B cell (primary cell): ENCODE measurements at regions of chr3 and their contacts with region 1.

Region 1: DNA sequence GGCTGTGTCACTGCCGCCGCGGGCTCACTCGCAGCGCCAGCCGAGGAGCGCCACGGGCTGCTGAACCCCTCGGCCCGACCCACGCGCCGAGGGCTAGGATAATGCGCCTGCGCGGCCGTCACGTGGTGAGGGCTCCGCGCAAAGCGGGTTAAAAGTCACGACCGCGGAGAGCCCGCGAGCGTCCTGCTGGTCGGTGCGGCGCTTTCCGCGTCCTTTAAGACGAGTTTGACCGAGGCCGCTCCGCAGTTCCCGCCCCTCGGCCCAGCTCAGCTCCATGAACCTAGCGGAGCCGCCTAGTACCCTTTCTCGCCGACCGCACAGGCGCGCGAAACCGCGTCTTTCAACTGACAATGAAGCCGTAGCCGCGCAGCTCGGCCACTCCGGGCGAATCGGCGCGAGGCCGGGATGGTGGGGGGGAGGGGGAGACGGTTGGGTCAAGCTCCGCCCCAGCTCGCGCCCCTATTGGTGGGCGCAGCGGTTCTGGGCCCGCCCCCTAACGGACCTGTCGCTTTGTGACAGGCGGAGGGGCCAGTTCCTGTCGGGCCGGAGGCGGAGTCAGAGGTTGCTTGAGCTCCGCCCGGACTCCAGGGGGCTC is 636 bp upstream of the STT3B start:
- DNase-seq: peak; percentile 99
- ATAC-seq: peak; percentile 84
- H3K4me3 ChIP-seq: peak overlapping the region; percentile 36 to 86 (median 82)
- H3K4me3 Mint-ChIP-seq: peak overlapping the region; percentile 98
- H3K27ac ChIP-seq: peak overlapping the region; percentile 94 to 98
- H3K27ac Mint-ChIP-seq: peak overlapping the region; percentile 99
- H3K4me1 ChIP-seq: peaks cover 36 to 37% of the 10 kb centered on the region in 2 donors
- H3K4me1 Mint-ChIP-seq: peaks cover 31% of the 10 kb centered on the region
- H3K27me3 ChIP-seq: no peaks in the 10 kb centered on the region
- H3K27me3 Mint-ChIP-seq: peaks cover 3% of the 10 kb centered on the region
- CTCF ChIP-seq: no peak

Region 2: GRCh38 chr3:30658328-30659052 is 873.6 kb before region 1 on chr3:
- CTCF ChIA-PET with region 1: no interaction called
- POLR2A ChIA-PET with region 1: no interaction called
- intact Hi-C with region 1: loop called (anchors 10 kb)
- DNase-seq: peak; percentile 74
- ATAC-seq: peak; percentile 83
- H3K4me3 ChIP-seq: peak overlapping the region in 2 of 5 experiments; percentile 2 to 23
- H3K4me3 Mint-ChIP-seq: peak overlapping the region; percentile 69
- H3K27ac ChIP-seq: peak overlapping the region; percentile 56 to 82
- H3K27ac Mint-ChIP-seq: peak overlapping the region; percentile 87
- H3K4me1 ChIP-seq: peaks cover 85 to 97% of the 10 kb centered on the region in 2 donors
- H3K4me1 Mint-ChIP-seq: peaks cover 93% of the 10 kb centered on the region
- H3K27me3 ChIP-seq: no peaks in the 10 kb centered on the region
- H3K27me3 Mint-ChIP-seq: no peaks in the 10 kb centered on the region
- CTCF ChIP-seq: no peak

Region 3: GRCh38 chr3:30826531-30826942 is 705.6 kb before region 1 on chr3:
- CTCF ChIA-PET with region 1: no interaction called
- POLR2A ChIA-PET with region 1: no interaction called
- intact Hi-C with region 1: no loop called
- DNase-seq: no peak
- ATAC-seq: no peak
- H3K4me3 ChIP-seq: no peak overlapping the region
- H3K4me3 Mint-ChIP-seq: no peak overlapping the region
- H3K27ac ChIP-seq: no peak overlapping the region
- H3K27ac Mint-ChIP-seq: no peak overlapping the region
- H3K4me1 ChIP-seq: no peaks in the 10 kb centered on the region
- H3K4me1 Mint-ChIP-seq: no peaks in the 10 kb centered on the region
- H3K27me3 ChIP-seq: no peaks in the 10 kb centered on the region
- H3K27me3 Mint-ChIP-seq: peaks cover 9% of the 10 kb centered on the region
- CTCF ChIP-seq: no peak

Region 4: GRCh38 chr3:31247850-31248562 is 284.1 kb before region 1 on chr3:
- CTCF ChIA-PET with region 1: no interaction called
- POLR2A ChIA-PET with region 1: no interaction called
- intact Hi-C with region 1: no loop called
- DNase-seq: no peak
- ATAC-seq: no peak
- H3K4me3 ChIP-seq: no peak overlapping the region
- H3K4me3 Mint-ChIP-seq: no peak overlapping the region
- H3K27ac ChIP-seq: no peak overlapping the region
- H3K27ac Mint-ChIP-seq: no peak overlapping the region
- H3K4me1 ChIP-seq: no peaks in the 10 kb centered on the region
- H3K4me1 Mint-ChIP-seq: no peaks in the 10 kb centered on the region
- H3K27me3 ChIP-seq: no peaks in the 10 kb centered on the region
- H3K27me3 Mint-ChIP-seq: peaks cover 7% of the 10 kb centered on the region
- CTCF ChIP-seq: no peak

Region 5: GRCh38 chr3:31462050-31462569 is 70.0 kb before region 1 on chr3:
- CTCF ChIA-PET with region 1: interaction called, 3 read pairs
- POLR2A ChIA-PET with region 1: interaction called, 11 read pairs
- intact Hi-C with region 1: loop called (anchors 1 kb)
- DNase-seq: peak; percentile 72
- ATAC-seq: peak; percentile 86
- H3K4me3 ChIP-seq: peak overlapping the region in 1 of 5 experiments; percentile 22
- H3K4me3 Mint-ChIP-seq: peak overlapping the region; percentile 66
- H3K27ac ChIP-seq: peak overlapping the region; percentile 68 to 76
- H3K27ac Mint-ChIP-seq: peak overlapping the region; percentile 93
- H3K4me1 ChIP-seq: peaks cover 20 to 24% of the 10 kb centered on the region in 2 donors
- H3K4me1 Mint-ChIP-seq: peaks cover 20% of the 10 kb centered on the region
- H3K27me3 ChIP-seq: no peaks in the 10 kb centered on the region
- H3K27me3 Mint-ChIP-seq: no peaks in the 10 kb centered on the region
- CTCF ChIP-seq: peak; percentile 44

Region 6: GRCh38 chr3:31777908-31778307 is 245.8 kb after region 1 on chr3:
- CTCF ChIA-PET with region 1: no interaction called
- POLR2A ChIA-PET with region 1: no interaction called
- intact Hi-C with region 1: no loop called
- DNase-seq: no peak
- ATAC-seq: no peak
- H3K4me3 ChIP-seq: no peak overlapping the region
- H3K4me3 Mint-ChIP-seq: peak overlapping the region; percentile 21
- H3K27ac ChIP-seq: peak overlapping the region in 1 of 2 donors; percentile 44
- H3K27ac Mint-ChIP-seq: peak overlapping the region; percentile 70
- H3K4me1 ChIP-seq: peaks cover 11 to 12% of the 10 kb centered on the region in 2 donors
- H3K4me1 Mint-ChIP-seq: peaks cover 69% of the 10 kb centered on the region
- H3K27me3 ChIP-seq: no peaks in the 10 kb centered on the region
- H3K27me3 Mint-ChIP-seq: no peaks in the 10 kb centered on the region
- CTCF ChIP-seq: no peak

Region 7: DNA sequence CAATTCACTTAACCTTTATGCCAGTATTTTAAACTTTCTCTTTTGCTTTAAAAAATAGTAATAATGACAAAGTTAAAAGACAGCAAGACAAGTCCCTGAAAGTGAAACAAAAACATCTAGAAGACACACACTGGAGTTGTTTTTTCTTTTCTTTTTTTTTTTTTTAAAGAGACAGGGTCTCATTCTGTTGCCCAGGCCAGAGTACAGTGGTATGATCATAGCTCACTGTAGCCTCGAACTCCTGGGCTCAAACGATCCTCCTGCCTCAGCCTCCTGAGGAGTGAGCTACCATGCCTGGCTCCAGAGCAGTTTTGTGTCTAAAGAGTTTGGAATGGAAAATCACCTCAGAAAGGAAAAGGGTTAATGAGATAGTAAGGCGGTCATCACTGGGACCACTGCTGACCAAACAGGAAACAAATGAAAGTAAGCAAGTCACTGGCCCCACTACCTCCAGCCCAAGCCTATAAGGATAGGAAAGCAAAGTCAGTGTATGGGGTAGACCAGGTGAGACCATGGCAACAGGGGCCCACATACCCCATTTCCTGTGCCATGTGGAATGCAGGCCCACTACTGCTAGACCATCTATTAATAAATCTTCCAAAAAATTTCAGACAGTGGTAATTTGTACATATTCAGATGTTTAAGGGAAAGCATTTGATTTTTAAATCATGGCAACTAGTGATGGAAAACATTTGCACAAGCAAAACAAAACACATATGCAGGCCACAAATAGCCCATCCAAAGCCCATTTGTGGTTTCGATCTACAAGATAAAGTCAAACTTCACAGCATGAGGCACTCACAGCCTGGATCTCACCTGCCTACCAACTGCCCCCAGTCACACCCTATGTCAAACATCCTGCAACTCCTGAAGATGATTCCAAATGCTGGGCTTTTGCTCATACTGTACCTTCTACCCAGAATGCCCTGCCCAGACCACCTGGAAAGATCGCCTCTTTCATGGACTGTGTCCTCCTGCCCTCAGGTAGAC is 386.4 kb after region 1 on chr3:
- CTCF ChIA-PET with region 1: no interaction called
- POLR2A ChIA-PET with region 1: no interaction called
- intact Hi-C with region 1: loop called (anchors 10 kb)
- DNase-seq: peak; percentile 46
- ATAC-seq: peak; percentile 64
- H3K4me3 ChIP-seq: peak overlapping the region in 1 of 5 experiments; percentile 9
- H3K4me3 Mint-ChIP-seq: peak overlapping the region; percentile 74
- H3K27ac ChIP-seq: peak overlapping the region; percentile 45 to 79
- H3K27ac Mint-ChIP-seq: peak overlapping the region; percentile 91
- H3K4me1 ChIP-seq: peaks cover 45 to 55% of the 10 kb centered on the region in 2 donors
- H3K4me1 Mint-ChIP-seq: peaks cover 80% of the 10 kb centered on the region
- H3K27me3 ChIP-seq: no peaks in the 10 kb centered on the region
- H3K27me3 Mint-ChIP-seq: no peaks in the 10 kb centered on the region
- CTCF ChIP-seq: no peak

Region 8: GRCh38 chr3:32106280-32106928 is 574.3 kb after region 1 on chr3 and contains the start of gene GPD1L:
- CTCF ChIA-PET with region 1: no interaction called
- POLR2A ChIA-PET with region 1: interaction called, 3 read pairs
- intact Hi-C with region 1: loop called (anchors 1 kb)
- DNase-seq: peak; percentile 94
- ATAC-seq: peak; percentile 99
- H3K4me3 ChIP-seq: peak within 1 kb of the TSS; percentile 46 to 79 (median 75)
- H3K4me3 Mint-ChIP-seq: peak within 1 kb of the TSS; percentile 94
- H3K27ac ChIP-seq: no peak within 1 kb of the TSS
- H3K27ac Mint-ChIP-seq: peak within 1 kb of the TSS; percentile 88
- H3K4me1 ChIP-seq: peaks cover 11 to 14% of the 10 kb centered on the region in 2 donors
- H3K4me1 Mint-ChIP-seq: peaks cover 15% of the 10 kb centered on the region
- H3K27me3 ChIP-seq: no peaks in the 10 kb centered on the region
- H3K27me3 Mint-ChIP-seq: no peaks in the 10 kb centered on the region
- CTCF ChIP-seq: no peak
- total RNA-seq, gene GPD1L: 9.3 TPM in 2 replicates

Region 9: GRCh38 chr3:33096093-33096868 is 1564.2 kb after region 1 on chr3:
- CTCF ChIA-PET with region 1: no interaction called
- POLR2A ChIA-PET with region 1: no interaction called
- intact Hi-C with region 1: loop called (anchors 5 kb)
- DNase-seq: peak; percentile 83
- ATAC-seq: peak; percentile 63
- H3K4me3 ChIP-seq: peak overlapping the region; percentile 83 to 100 (median 94)
- H3K4me3 Mint-ChIP-seq: peak overlapping the region; percentile 96
- H3K27ac ChIP-seq: peak overlapping the region; percentile 94 to 96
- H3K27ac Mint-ChIP-seq: peak overlapping the region; percentile 94
- H3K4me1 ChIP-seq: peaks cover 11 to 21% of the 10 kb centered on the region in 2 donors
- H3K4me1 Mint-ChIP-seq: peaks cover 35% of the 10 kb centered on the region
- H3K27me3 ChIP-seq: no peaks in the 10 kb centered on the region
- H3K27me3 Mint-ChIP-seq: no peaks in the 10 kb centered on the region
- CTCF ChIP-seq: no peak